GM10248 (cell line): ENCODE measurements at regions of chr12 and their contacts with region 1.

Region 1: GRCh38 chr12:52069327-52070184 is at the start of gene ATG101:
- DNase-seq: peak; percentile 95
- CTCF ChIP-seq: peak; percentile 93

Region 2: GRCh38 chr12:52032804-52033502 is 36.6 kb before region 1 on chr12:
- CTCF ChIA-PET with region 1: interaction called, 1,220 read pairs
- POLR2A ChIA-PET with region 1: interaction called, 7 read pairs
- DNase-seq: peak; percentile 95
- CTCF ChIP-seq: no peak

Region 3: GRCh38 chr12:52050761-52051541 is 18.6 kb before region 1 on chr12 and contains the start of gene NR4A1:
- CTCF ChIA-PET with region 1: interaction called, 1,220 read pairs
- POLR2A ChIA-PET with region 1: interaction called, 16 read pairs
- DNase-seq: peak; percentile 98
- CTCF ChIP-seq: peak; percentile 34

Region 4: DNA sequence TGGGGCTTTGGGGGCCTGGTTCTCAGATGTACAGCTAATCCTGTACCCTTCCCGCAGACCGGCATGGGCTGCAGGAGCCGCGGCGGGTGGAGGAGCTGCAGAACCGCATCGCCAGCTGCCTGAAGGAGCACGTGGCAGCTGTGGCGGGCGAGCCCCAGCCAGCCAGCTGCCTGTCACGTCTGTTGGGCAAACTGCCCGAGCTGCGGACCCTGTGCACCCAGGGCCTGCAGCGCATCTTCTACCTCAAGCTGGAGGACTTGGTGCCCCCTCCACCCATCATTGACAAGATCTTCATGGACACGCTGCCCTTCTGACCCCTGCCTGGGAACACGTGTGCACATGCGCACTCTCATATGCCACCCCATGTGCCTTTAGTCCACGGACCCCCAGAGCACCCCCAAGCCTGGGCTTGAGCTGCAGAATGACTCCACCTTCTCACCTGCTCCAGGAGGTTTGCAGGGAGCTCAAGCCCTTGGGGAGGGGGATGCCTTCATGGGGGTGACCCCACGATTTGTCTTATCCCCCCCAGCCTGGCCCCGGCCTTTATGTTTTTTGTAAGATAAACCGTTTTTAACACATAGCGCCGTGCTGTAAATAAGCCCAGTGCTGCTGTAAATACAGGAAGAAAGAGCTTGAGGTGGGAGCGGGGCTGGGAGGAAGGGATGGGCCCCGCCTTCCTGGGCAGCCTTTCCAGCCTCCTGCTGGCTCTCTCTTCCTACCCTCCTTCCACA is 10.8 kb before region 1 on chr12:
- CTCF ChIA-PET with region 1: interaction called, 28 read pairs
- POLR2A ChIA-PET with region 1: interaction called, 4 read pairs
- DNase-seq: no peak
- CTCF ChIP-seq: no peak

Region 5: DNA sequence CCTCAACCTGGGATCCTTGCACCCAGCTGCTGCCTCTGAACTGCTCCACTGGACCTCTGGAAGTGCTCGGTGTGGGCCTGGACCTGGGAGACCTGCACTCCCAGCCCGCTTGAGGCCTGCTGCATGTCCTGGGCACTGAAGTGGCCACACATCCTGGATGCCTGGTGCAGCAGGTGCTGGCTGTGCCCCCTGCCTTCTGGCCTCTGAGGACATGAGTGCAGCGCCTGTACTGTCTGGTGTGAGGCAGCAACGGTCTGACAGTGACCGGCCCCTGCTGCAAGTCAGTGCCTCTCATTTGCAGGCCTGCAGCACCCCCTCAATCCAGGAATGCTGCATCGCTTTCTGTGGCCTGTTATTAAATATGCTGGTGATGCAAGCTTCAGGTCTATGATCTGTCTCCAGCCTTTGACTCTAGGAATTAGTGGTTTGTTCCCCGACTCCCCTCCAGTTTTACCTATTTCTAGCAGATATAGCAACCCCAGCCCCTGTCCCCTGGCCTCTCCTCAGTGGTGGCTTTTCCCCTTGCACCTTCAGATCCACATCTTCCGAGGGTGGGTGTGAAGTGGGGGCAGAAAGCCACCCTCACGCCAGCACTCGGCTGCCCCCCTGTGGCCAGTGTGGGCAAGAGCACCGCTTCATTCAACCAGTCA is 13.6 kb after region 1 on chr12:
- CTCF ChIA-PET with region 1: interaction called, 108 read pairs
- POLR2A ChIA-PET with region 1: interaction called, 6 read pairs
- DNase-seq: peak; percentile 87
- CTCF ChIP-seq: peak; percentile 94

Region 6: GRCh38 chr12:52121824-52122539 is 52.4 kb after region 1 on chr12:
- CTCF ChIA-PET with region 1: interaction called, 26 read pairs
- POLR2A ChIA-PET with region 1: no interaction called
- DNase-seq: peak; percentile 81
- CTCF ChIP-seq: peak; percentile 81